Endothelial cell of umbilical vein (primary cell): ENCODE measurements at regions of chr7 and their contacts with region 1.

Region 1: DNA sequence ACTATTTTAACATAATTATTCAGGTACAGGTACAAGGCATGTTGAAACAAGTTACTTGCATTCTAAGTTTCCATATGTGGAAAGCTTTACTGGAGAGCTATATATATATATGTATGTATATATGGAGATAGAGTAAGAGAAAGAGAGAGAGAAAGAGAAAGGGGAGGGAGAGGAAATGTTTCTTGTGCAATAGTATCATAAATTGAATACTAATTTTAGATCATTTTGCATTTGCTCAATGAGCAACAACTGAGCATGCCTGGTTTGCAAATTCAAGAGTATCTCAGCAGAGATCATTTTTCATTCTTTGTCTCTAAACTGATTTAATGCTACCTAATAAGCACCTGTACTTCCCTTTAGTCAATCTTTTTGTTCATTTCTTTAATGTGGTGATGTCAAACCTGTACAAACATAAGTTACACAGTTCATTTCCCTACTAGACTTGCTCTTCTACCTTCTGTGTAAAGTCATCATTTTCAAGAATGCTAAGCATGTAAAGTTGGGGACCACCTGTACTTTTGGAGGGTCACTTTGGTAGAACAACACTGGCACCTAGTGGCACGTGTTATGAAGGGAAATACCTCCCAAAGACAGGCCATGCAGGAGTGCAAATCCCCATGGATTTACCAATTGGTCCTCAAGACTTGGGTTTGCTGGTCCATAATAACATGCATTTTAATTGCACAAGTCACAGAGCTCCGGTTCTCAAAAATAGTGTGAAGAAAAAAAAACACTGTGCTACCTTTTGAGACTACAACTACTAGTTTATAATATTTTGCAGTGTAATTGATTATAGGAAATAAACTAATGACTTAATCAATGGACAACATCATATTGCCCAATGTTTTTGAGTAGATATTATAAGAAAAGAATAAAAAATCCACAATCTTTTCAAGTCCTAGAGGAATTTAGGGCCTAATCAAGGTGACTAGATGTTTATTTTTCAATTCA is 431.2 kb upstream of the IGFBP3 start:
- DNase-seq: peak; percentile 65
- H3K4me3 ChIP-seq: no peak overlapping the region
- H3K27ac ChIP-seq: no peak overlapping the region
- H3K4me1 ChIP-seq: no peaks in the 10 kb centered on the region
- H3K27me3 ChIP-seq: peaks cover 0 to 2% of the 10 kb centered on the region in 2 experiments
- CTCF ChIP-seq: peak; percentile 37 to 53
- POLR2A ChIP-seq: no peak

Region 2: GRCh38 chr7:45872116-45873034 is 479.9 kb before region 1 on chr7:
- CTCF ChIA-PET with region 1: interaction called, 3 read pairs
- POLR2A ChIA-PET with region 1: no interaction called
- dilution Hi-C with region 1: no loop called
- intact Hi-C with region 1: loop called (anchors 1 kb)
- DNase-seq: no peak
- H3K4me3 ChIP-seq: no peak overlapping the region
- H3K27ac ChIP-seq: no peak overlapping the region
- H3K4me1 ChIP-seq: peaks cover 15% of the 10 kb centered on the region
- H3K27me3 ChIP-seq: no peaks in the 10 kb centered on the region
- CTCF ChIP-seq: peak; percentile 67 to 71
- POLR2A ChIP-seq: no peak

Region 3: GRCh38 chr7:45917658-45918057 is 434.6 kb before region 1 on chr7:
- CTCF ChIA-PET with region 1: interaction called, 57 read pairs
- POLR2A ChIA-PET with region 1: no interaction called
- dilution Hi-C with region 1: no loop called
- intact Hi-C with region 1: loop called (anchors 1 kb)
- DNase-seq: peak; percentile 69
- H3K4me3 ChIP-seq: no peak overlapping the region
- H3K27ac ChIP-seq: no peak overlapping the region
- H3K4me1 ChIP-seq: peaks cover 24% of the 10 kb centered on the region
- H3K27me3 ChIP-seq: peaks cover 22 to 37% of the 10 kb centered on the region in 2 experiments
- CTCF ChIP-seq: peak; percentile 87 to 93
- POLR2A ChIP-seq: no peak

Region 4: GRCh38 chr7:46244757-46245156 is 107.5 kb before region 1 on chr7:
- CTCF ChIA-PET with region 1: no interaction called
- POLR2A ChIA-PET with region 1: no interaction called
- dilution Hi-C with region 1: no loop called
- intact Hi-C with region 1: no loop called
- DNase-seq: no peak
- H3K4me3 ChIP-seq: no peak overlapping the region
- H3K27ac ChIP-seq: no peak overlapping the region
- H3K4me1 ChIP-seq: no peaks in the 10 kb centered on the region
- H3K27me3 ChIP-seq: no peaks in the 10 kb centered on the region
- CTCF ChIP-seq: no peak
- POLR2A ChIP-seq: no peak

Region 5: GRCh38 chr7:46264646-46265045 is 87.6 kb before region 1 on chr7:
- CTCF ChIA-PET with region 1: no interaction called
- POLR2A ChIA-PET with region 1: no interaction called
- dilution Hi-C with region 1: no loop called
- intact Hi-C with region 1: no loop called
- DNase-seq: no peak
- H3K4me3 ChIP-seq: no peak overlapping the region
- H3K27ac ChIP-seq: no peak overlapping the region
- H3K4me1 ChIP-seq: no peaks in the 10 kb centered on the region
- H3K27me3 ChIP-seq: no peaks in the 10 kb centered on the region
- CTCF ChIP-seq: no peak
- POLR2A ChIP-seq: no peak

Region 6: GRCh38 chr7:47179812-47180515 is 827.7 kb after region 1 on chr7:
- CTCF ChIA-PET with region 1: no interaction called
- POLR2A ChIA-PET with region 1: no interaction called
- dilution Hi-C with region 1: no loop called
- intact Hi-C with region 1: loop called (anchors 2 kb)
- DNase-seq: peak; percentile 51
- H3K4me3 ChIP-seq: no peak overlapping the region
- H3K27ac ChIP-seq: no peak overlapping the region
- H3K4me1 ChIP-seq: no peaks in the 10 kb centered on the region
- H3K27me3 ChIP-seq: peaks cover 0 to 2% of the 10 kb centered on the region in 2 experiments
- CTCF ChIP-seq: peak; percentile 69 to 74
- POLR2A ChIP-seq: no peak

Region 7: GRCh38 chr7:47301105-47301477 is 948.8 kb after region 1 on chr7:
- CTCF ChIA-PET with region 1: no interaction called
- POLR2A ChIA-PET with region 1: no interaction called
- dilution Hi-C with region 1: no loop called
- intact Hi-C with region 1: no loop called
- DNase-seq: no peak
- H3K4me3 ChIP-seq: no peak overlapping the region
- H3K27ac ChIP-seq: no peak overlapping the region
- H3K4me1 ChIP-seq: no peaks in the 10 kb centered on the region
- H3K27me3 ChIP-seq: no peaks in the 10 kb centered on the region
- CTCF ChIP-seq: no peak
- POLR2A ChIP-seq: no peak